Mammary epithelial cell (primary cell): ENCODE measurements at regions of chr12 and their contacts with region 1.

Region 1: DNA sequence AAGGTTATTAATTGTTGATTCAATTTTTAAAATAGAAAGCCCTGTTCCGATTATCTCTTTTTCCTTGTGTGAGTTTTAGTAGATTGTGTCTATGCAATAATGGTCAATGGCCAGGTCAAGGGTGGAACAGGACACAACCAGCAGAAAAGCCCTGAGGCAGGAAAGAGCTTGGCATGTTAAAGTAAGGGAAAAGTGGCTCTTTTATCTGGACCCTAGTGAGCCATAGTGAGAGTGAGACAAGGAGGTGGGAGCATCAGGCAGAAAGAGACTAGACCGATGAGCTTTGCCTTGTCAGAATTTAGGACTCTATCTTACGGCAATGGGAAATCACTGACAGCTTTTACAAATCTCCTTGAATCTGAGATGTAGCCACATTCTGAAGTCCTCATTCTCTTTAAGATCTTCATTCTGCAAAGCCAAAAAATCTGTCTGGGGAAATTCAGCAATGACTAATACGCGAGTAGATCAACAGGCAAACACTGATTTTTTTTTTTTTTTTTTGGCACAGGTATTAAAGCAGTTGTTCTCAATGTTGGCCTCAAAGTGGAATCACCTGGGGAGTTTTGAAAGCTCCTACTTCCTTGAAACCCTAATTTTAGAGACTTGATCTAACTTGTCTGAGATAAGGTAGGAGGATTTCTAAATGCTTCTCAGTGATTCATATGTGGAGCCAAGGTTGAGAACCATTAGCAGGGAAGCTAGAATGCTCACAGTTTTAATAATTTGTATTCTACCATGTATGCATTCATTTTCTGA is 33.9 kb downstream of the TMEM19 start:
- DNase-seq: peak; percentile 95
- H3K4me3 ChIP-seq: peak overlapping the region in 1 of 3 experiments; percentile 16
- H3K27ac ChIP-seq: peak overlapping the region; percentile 22
- H3K4me1 ChIP-seq: peaks cover 16% of the 10 kb centered on the region
- H3K27me3 ChIP-seq: no peaks in the 10 kb centered on the region
- CTCF ChIP-seq: no peak

Region 2: DNA sequence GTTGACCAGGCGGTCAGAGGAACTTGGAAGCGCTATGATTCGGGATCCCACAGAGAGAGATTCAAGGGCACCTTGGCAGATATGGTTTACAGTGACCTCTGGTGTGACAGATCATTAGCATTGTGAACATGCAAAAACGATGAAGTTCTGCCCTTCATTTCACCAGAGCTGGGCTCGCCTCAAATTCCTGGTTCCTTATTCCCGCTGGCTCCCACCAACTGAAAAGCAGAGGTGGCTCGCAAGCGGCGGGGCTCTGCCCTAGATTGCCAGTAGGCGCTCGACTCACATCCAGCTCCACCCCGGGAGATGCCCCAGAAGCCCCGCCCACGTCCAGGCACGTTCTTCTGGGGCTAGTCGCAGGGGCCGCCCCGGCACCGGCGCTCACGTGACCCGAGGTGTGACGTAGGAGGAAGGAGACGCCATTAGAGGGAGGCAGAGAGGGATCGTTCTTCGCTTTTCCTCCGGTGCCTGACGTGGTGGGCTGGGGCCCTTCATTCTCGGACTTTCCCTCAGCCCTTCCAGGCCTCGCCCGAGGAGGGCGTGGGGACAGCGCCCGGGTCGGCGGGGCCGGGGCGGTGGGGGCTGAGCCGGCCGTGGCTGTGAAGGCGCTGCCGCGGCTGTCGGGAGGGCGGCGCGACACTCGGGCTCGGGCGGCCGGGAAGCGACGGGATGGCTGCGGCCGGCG is 34.8 kb after region 1 on chr12 and contains the start of gene RAB21:
- CTCF ChIA-PET with region 1: interaction called, 4 read pairs
- dilution Hi-C with region 1: loop called (anchors 5 kb)
- in situ Hi-C with region 1: no loop called
- intact Hi-C with region 1: no loop called
- DNase-seq: peak; percentile 97
- H3K4me3 ChIP-seq: peak within 1 kb of the TSS; percentile 66 to 86 (median 72)
- H3K27ac ChIP-seq: peak within 1 kb of the TSS; percentile 88
- H3K4me1 ChIP-seq: peaks cover 5% of the 10 kb centered on the region
- H3K27me3 ChIP-seq: no peaks in the 10 kb centered on the region
- CTCF ChIP-seq: peak in 1 of 2 donors; percentile 30
- total RNA-seq, gene RAB21: 13.2 to 76.6 TPM

Region 3: DNA sequence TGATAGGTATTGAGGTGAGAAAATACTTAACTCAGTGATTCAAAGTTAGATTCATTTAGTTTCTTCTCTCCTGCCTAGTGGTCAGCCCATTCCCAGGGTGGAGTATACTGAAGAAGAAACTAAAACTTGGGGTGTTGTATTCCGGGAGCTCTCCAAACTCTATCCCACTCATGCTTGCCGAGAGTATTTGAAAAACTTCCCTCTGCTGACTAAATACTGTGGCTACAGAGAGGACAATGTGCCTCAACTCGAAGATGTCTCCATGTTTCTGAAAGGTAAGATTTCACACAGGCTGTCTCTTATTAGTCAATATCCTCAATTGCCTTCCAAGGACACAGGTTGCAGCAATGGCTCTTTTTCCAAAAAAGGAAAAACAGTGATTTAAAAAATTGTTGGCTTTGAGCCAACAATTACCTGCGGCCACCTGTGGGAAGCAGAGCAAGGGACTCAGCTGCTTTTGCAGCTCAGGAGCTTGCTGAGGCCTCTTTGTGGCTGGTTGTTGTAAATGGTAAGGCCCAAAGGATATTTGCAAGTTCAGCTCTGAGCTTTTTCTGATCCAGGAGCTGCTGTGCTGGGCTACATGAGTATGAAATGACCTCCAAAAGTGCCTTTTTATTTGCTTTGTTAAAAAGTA is 252.8 kb after region 1 on chr12:
- CTCF ChIA-PET with region 1: no interaction called
- dilution Hi-C with region 1: no loop called
- in situ Hi-C with region 1: no loop called
- intact Hi-C with region 1: no loop called
- DNase-seq: no peak
- H3K4me3 ChIP-seq: no peak overlapping the region
- H3K27ac ChIP-seq: no peak overlapping the region
- H3K4me1 ChIP-seq: no peaks in the 10 kb centered on the region
- H3K27me3 ChIP-seq: peaks cover 7% of the 10 kb centered on the region
- CTCF ChIP-seq: no peak